Heart right ventricle (tissue), 16 donors: ENCODE measurements at regions of chr15 and their contacts with region 1.

Region 1: GRCh38 chr15:97903971-97904572 is 56.4 kb upstream of the ARRDC4 start:
- DNase-seq: peak; percentile 63 to 78
- ATAC-seq: peak; percentile 84 to 96 (median 92)
- H3K4me3 ChIP-seq: no peak overlapping the region
- H3K27ac ChIP-seq: no peak overlapping the region
- H3K4me1 ChIP-seq: peaks cover 0 to 7% (median 0%) of the 10 kb centered on the region in 9 donors
- H3K27me3 ChIP-seq: peaks cover 0 to 80% (median 43%) of the 10 kb centered on the region in 7 donors
- CTCF ChIP-seq: peak; percentile 48 to 82 (median 70)

Region 2: GRCh38 chr15:97623091-97623661 is 280.9 kb before region 1 on chr15:
- intact Hi-C with region 1: no loop called
- DNase-seq: no peak
- ATAC-seq: no peak
- H3K4me3 ChIP-seq: no peak overlapping the region
- H3K27ac ChIP-seq: no peak overlapping the region
- H3K4me1 ChIP-seq: no peaks in the 10 kb centered on the region
- H3K27me3 ChIP-seq: peaks cover 0 to 4% (median 0%) of the 10 kb centered on the region in 7 donors
- CTCF ChIP-seq: no peak

Region 3: DNA sequence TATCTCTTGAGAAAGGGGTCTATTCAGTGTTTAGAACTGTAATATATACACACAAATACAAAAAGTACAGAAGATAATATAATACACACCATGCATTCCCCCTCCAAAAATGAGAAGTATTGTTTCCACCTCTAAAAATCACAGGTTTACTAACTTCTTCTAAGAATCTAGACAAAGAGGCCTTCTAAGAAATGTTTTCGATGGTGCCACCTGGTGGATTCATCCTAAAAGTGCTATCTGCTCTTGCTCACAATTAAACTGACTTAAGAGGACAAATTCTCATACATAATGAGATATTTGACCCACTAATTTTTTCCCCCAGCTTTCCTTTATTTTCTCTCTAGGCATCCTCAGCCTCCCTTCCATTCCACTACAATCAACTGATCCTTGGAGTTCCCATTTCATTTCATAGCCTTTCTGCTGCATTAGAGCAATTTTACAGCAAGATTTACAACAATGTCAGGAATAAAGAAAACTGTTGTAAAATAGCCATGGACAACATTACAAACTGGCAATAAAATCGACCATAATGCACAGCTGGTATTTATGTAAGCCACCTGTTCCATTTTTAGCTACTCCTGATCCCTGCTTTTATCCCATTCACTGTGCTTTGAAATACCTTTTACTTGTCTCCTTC is 181.0 kb after region 1 on chr15:
- intact Hi-C with region 1: loop called in 8 of 10 experiments (anchors 1 to 5 kb)
- DNase-seq: peak in 1 of 2 donors; percentile 40
- ATAC-seq: no peak
- H3K4me3 ChIP-seq: no peak overlapping the region
- H3K27ac ChIP-seq: no peak overlapping the region
- H3K4me1 ChIP-seq: no peaks in the 10 kb centered on the region
- H3K27me3 ChIP-seq: no peaks in the 10 kb centered on the region
- CTCF ChIP-seq: peak; percentile 45 to 82 (median 74)

Region 4: DNA sequence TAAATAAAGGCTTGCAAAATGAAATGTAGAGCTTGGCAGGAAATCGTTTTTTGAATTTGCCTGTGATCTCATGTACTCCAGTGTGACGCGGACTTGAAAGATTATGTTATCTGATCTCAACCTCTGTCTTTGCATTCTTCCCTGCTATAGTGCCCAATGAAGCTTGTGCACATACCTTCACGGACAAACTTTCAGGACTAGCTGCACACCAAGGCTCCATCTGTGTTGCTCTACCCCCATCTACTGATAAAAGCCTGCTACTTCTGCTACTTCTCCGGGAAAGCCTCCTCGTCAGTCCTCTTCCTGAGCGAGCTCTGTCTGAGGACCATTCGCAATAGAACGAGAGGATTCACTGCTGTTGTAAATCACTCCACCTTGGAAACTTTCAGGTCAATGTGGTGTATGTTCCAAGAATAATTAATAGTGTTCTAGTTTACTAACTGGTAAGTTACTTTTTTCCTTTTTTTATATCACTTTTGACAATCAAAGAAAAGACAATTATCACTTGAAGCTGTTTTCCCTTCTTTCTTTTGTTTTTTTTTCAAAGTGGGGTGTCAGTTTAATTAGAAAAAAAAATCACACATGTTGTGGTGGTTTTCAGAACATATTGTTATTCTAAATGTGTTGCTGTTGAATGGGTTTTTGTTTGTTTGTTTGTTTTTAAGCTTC is 274.0 kb after region 1 on chr15:
- intact Hi-C with region 1: loop called (anchors 1 to 10 kb)
- DNase-seq: peak in 1 of 2 donors; percentile 36
- ATAC-seq: peak; percentile 66 to 88 (median 72)
- H3K4me3 ChIP-seq: no peak overlapping the region
- H3K27ac ChIP-seq: no peak overlapping the region
- H3K4me1 ChIP-seq: peaks cover 0 to 4% (median 0%) of the 10 kb centered on the region in 9 donors
- H3K27me3 ChIP-seq: peaks cover 0 to 75% (median 41%) of the 10 kb centered on the region in 7 donors
- CTCF ChIP-seq: peak; percentile 19 to 78 (median 67)

Region 5: GRCh38 chr15:98292442-98293240 is 388.6 kb after region 1 on chr15:
- intact Hi-C with region 1: loop called in 8 of 10 experiments (anchors 5 to 10 kb)
- DNase-seq: peak; percentile 12 to 28
- ATAC-seq: peak in 1 of 8 donors; percentile 53
- H3K4me3 ChIP-seq: peak overlapping the region in 3 of 10 donors; percentile 11 to 31 (median 14)
- H3K27ac ChIP-seq: no peak overlapping the region
- H3K4me1 ChIP-seq: peaks cover 0 to 8% (median 5%) of the 10 kb centered on the region in 9 donors
- H3K27me3 ChIP-seq: peaks cover 3 to 77% (median 62%) of the 10 kb centered on the region in 7 donors
- CTCF ChIP-seq: peak; percentile 17 to 64 (median 56)